ENCODE measurements at regions of chr6 and their contacts with region 1.

Region 1: GRCh38 chr6:143677891-143678791 is at the start of gene PHACTR2:
- DNase-seq: peak; percentile 90
- total RNA-seq, gene PHACTR2: 59.3 TPM

Region 2: GRCh38 chr6:143745166-143746133 is 67.3 kb after region 1 on chr6:
- intact Hi-C with region 1: loop called (anchors 5 kb)
- DNase-seq: no peak

Region 3: DNA sequence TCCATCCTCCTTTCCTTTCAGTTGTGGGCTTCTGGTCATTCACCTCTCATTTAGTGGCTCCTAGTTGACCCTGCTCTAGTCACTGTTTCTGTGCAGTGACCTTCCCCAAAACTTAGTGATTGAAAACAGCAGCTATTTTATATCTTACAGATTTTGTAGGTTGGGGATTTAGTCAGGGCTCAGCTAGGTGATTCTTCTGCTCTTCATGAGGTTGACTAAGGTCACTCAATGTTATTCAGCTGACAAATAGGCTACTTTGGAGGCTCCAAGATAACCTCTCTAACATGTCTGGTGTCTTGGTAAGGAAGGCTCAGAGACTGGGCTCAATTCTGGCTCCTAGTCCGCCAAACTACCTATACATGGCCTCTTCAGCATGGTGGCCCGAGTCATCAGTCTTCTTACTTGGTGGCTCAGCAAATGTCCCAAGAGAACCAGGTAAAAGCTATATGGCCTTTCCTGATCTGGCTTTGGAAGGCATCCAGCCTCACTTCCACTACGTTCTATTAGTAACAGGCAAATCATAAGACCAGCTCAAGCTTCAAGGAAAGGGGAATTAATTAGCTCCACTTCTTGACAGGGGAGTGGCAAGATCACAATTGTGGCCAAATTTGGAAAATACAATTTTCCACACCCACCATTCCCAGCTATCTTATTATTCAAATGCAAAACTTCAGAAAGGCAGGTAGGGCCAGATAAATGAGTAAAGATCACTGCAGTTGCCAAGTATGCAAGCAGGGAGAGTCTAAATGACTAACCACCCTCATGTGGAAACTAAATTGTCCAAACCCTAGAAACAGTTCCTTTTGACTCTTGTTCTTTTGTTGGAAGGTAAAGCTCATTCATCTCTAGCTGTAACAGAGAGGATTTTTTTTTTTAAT is 114.5 kb after region 1 on chr6:
- intact Hi-C with region 1: no loop called
- DNase-seq: no peak

Region 4: DNA sequence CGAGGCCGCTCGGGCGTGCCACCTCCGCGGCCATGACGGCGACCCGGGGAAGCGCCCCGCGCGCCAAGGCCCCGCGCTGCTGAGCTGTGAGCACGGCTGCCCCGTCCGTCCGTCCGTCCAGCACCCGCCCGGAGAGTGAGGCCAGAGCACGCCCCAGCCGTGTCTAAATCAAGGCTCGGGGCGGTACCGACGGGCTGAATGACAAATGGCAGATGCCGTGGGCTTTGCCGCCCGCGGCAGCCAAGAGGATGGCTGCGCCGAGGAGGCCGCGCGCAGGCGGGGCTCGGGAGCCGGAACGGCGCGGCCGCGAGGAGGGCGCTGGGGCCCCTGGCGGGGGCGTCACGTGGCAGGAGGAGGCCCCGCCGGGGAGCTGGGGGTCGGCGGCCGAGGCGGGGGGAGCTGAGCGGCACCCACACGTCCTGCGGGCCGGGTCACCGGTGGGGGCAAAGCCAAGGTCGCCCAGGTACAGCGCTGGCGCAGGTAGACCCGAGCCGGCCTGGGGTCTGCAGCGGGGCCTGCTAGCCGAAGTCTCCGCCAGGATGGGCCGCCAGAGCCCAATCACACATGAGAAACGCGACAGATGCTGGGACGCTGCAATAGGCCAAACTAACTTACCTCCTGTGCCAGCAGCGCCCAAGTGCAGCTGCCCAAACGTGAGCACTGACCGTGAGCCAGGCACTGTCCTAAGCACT is 330.1 kb after region 1 on chr6 and contains the start of gene PLAGL1:
- intact Hi-C with region 1: loop called (anchors 10 kb)
- DNase-seq: peak; percentile 84
- total RNA-seq, gene PLAGL1: 13.0 TPM

Measured in cardiac septum (tissue), 1 donor.